ENCODE measurements at regions of chr11 and their contacts with region 1.

Region 1: DNA sequence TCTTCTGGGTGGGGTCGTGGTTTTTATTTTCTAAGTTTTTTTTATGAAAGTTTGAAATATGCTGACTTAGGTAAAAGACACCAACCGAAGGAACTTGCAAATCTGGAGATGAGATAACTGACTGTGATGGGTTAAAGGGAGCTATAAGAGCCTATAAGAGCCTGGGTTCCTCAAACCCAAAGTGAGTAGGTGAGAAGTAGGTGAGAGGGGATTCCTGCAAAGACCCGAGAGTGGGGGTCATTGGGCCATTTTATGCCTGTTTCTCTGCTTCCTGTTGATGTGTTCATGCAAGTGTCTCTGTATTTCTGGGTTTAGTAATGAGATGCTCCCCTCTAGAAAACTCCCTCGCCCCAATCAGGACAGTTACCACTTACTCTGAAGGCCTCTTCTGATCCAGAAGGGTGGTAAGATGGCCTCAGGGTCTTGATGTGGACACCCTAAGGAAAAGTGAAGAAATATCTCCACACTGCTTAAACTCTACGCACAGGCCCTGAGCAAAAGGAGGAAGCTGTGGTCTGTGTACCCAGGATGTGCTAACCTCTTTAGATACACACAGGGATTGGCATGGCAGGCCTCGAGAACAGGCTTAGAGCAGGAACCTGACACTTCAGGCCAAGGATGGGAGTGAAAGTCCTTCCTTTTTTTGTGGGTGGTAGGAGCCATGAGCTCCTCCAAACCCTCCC is 1.8 kb downstream of the FLI1 start:
- DNase-seq: no peak
- ATAC-seq: peak; percentile 48
- H3K4me3 Mint-ChIP-seq: peak overlapping the region; percentile 92
- H3K27ac Mint-ChIP-seq: peak overlapping the region; percentile 91
- H3K4me1 Mint-ChIP-seq: peaks cover 48% of the 10 kb centered on the region
- H3K27me3 Mint-ChIP-seq: peaks cover 15% of the 10 kb centered on the region

Region 2: GRCh38 chr11:128582496-128583366 is 112.9 kb before region 1 on chr11:
- POLR2A ChIA-PET with region 1: no interaction called
- DNase-seq: no peak
- ATAC-seq: peak; percentile 64
- H3K4me3 Mint-ChIP-seq: peak overlapping the region; percentile 53
- H3K27ac Mint-ChIP-seq: peak overlapping the region; percentile 53
- H3K4me1 Mint-ChIP-seq: peaks cover 29% of the 10 kb centered on the region
- H3K27me3 Mint-ChIP-seq: peaks cover 11% of the 10 kb centered on the region

Region 3: DNA sequence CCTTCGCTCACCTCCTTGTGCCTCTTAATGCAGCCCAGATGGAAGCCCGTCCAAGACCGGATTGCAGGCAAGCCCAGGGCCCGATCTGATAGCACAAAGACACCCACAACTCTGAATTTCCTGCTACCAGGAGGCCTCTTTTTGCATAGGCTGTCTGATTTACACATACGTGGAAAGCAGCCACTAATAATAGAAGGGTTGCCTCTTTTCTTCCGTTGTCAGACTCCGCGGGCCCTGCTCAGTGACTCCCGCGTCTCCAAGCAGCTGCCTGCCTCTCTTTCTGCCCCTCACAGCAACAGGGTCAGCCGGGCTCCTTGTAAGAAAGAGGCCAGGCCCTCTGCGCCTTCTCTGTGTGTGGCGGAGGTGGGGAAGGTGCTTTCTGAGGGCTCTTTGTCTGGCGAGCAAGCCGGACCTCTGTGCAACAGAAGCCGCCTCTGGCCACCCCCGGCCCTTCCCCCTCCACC is 24.9 kb after region 1 on chr11:
- POLR2A ChIA-PET with region 1: interaction called, 29 read pairs
- DNase-seq: peak; percentile 55
- ATAC-seq: peak; percentile 53
- H3K4me3 Mint-ChIP-seq: peak overlapping the region; percentile 84
- H3K27ac Mint-ChIP-seq: peak overlapping the region; percentile 92
- H3K4me1 Mint-ChIP-seq: peaks cover 89% of the 10 kb centered on the region
- H3K27me3 Mint-ChIP-seq: no peaks in the 10 kb centered on the region

Region 4: DNA sequence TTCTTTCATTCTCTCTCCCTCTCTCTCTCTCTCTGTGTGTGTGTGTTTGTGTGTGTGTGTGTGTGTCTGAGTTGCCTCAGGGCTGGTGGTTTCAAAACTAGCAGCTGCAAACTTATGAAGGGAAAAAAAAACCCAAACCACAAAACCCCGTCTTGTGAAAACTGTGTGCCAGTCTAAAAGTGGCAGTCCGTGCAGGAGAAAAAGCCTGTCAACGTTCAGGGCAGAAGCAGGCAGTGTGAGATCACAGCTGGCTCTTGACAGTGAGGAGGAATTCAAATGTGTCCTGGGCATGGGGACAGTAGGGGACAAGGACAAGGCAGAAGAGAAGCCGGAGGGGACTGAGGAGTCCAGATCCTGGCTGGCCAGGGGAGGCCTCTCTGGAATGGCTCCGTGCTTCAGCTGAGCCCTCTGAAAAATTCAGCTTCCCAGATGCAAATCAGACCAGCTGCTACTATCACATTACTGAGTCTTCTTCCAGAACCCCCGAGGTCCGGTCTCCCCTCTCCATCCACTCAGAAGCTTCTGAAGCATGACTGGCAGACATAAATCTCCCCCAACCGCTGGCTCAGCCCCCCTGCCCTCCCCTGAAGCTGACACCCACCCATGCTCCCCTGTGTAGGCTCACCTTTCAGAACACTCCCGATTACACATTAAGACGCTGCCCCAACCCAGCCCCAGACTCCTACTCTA is 30.1 kb after region 1 on chr11:
- POLR2A ChIA-PET with region 1: interaction called, 19 read pairs
- DNase-seq: no peak
- ATAC-seq: peak; percentile 28
- H3K4me3 Mint-ChIP-seq: peak overlapping the region; percentile 70
- H3K27ac Mint-ChIP-seq: peak overlapping the region; percentile 88
- H3K4me1 Mint-ChIP-seq: peaks cover 90% of the 10 kb centered on the region
- H3K27me3 Mint-ChIP-seq: no peaks in the 10 kb centered on the region

Region 5: DNA sequence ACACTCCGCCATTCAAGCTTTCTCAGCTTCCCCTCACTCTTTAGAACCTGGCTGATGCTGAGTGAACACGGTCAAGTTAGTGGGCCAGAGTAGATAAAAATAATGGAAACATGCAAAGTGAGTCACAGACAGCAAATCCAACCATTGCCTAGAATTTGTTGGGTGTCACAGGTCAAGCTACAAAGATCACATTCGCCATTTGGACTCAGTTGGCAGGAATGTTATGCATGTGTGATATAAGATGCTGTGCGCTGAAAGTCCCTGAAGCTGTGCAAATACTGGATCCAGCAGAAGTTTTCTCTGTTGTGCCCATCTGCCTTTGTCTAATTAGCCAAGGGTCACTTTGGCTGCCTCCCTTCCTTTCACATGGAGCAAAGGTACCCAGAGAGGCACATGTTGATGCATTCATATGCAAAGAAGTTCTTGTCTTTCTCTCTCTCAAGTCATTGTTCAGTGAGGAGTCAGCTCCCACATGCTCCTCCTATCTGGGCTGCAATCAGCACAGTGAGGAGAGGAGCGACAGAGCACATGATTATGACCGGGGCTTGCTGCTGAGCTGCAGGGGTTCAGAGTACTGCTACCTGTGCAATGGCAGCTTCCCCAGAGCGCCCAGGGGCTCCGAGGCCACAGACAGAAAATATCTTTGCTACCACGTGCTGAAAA is 37.9 kb after region 1 on chr11:
- POLR2A ChIA-PET with region 1: interaction called, 19 read pairs
- DNase-seq: no peak
- ATAC-seq: peak; percentile 46
- H3K4me3 Mint-ChIP-seq: peak overlapping the region; percentile 72
- H3K27ac Mint-ChIP-seq: peak overlapping the region; percentile 89
- H3K4me1 Mint-ChIP-seq: peaks cover 80% of the 10 kb centered on the region
- H3K27me3 Mint-ChIP-seq: no peaks in the 10 kb centered on the region

Measured in activated naive CD8-positive, alpha-beta T cell treated with anti-CD3 and anti-CD28 coated beads, Interleukin-2, amount 10 ng/mL, durations not matched to agents 7 days and 5 days (primary cell).